Gastrocnemius medialis (tissue), 4 donors: ENCODE measurements at regions of chr10 and their contacts with region 1.

Region 1: DNA sequence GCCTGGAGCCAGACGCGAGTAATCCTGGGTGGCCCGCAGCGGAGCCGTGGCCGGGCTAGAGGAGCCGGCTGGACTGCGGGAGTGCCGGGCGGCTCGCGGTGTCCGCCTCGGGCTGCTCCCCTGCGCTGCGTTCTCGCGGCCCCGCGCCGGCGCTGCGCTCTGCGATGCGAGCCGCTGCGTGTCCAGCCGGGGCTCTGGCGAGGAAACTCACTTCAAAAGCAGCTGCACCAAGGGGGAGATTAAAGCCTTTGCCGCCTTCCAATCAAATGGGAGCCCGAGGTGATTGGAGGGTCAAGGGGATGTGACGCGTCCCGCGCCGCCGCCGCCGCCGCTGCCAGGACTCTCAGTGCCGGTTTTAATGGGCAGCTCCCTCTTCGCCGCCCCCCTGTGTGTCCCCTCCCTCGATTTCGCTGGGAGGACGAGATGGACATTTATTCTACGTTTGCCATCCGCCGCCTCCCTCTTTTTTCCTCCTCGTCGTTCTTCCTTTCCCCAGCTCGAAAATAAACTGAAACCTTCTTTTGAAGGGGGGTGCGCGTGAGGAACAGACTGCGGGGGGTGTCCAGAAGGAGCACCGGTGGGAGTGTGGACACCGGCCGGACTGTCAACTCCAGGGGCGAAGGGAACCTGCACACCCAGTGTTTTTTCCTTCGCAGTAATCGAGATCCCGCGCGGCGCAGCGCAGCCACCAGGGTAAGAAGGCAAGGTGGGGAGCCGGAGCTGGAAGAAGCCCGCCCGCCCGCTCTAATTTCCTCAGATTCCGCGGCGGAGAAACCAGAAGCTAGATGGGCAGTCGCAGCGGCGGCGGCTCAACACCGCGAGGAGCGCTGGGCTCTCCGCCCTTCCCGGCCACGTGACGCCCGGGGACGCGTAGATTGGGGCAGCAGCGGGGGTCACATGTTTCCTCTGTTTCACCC is at the start of gene ZNF503:
- DNase-seq: peak; percentile 93 to 97
- ATAC-seq: peak; percentile 75 to 83
- H3K4me3 ChIP-seq: peak within 1 kb of the TSS; percentile 57 to 82 (median 72)
- H3K27ac ChIP-seq: peak within 1 kb of the TSS; percentile 85 to 98 (median 98)
- H3K4me1 ChIP-seq: peaks cover 0 to 30% of the 10 kb centered on the region in 2 donors
- H3K27me3 ChIP-seq: peaks cover 0 to 37% (median 29%) of the 10 kb centered on the region in 3 donors
- CTCF ChIP-seq: peak in 4 of 5 experiments; percentile 15 to 39 (median 34)
- POLR2A ChIP-seq: peak; percentile 86 to 91
- total RNA-seq, gene ZNF503: 1.7 to 2.0 (median 1.8) TPM

Region 2: DNA sequence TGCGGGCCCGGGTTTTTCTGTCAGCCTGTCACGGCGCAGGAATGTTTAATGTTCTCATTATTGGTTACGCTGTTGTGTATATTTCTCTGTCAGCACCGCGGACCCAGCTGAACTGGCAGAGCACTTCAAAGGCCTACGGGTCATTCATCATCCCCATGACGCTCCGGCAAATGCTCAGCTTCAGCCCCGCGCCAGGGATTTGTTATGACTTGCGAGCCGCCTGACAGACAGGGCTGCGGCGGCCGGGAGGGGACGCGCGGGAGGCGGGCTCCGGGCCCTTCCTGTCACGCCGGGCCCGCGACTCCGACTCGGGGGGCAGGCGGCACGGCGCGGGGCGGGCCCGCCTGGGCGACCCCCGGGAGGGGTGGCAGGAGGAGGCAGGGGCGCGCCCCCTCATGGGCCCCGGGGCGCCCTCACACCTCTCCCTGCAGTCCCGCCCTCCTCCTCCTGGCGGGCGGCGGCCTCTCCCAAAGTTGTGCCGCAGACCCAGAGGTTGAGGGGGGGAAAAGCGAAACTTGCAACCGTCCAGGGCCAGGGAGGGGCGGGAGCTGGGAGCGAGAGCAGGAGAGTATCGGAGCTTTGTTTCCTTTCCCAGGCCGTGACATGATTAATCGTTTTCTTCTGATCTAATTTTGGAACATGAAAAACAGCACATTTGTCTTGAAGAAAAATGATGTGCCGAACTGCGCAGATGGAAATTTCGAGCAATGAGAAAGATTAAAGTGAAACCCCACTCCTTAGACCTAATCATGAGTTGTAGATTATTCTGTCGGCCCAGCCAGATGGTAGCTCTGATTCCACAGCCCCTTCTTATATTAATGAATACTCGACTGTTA is 106.7 kb before region 1 on chr10:
- in situ Hi-C with region 1: no loop called
- intact Hi-C with region 1: loop called (anchors 2 kb)
- DNase-seq: peak; percentile 69 to 80
- ATAC-seq: peak; percentile 76 to 77
- H3K4me3 ChIP-seq: peak overlapping the region; percentile 58 to 76 (median 64)
- H3K27ac ChIP-seq: peak overlapping the region; percentile 87 to 92 (median 90)
- H3K4me1 ChIP-seq: peaks cover 21 to 22% of the 10 kb centered on the region in 2 donors
- H3K27me3 ChIP-seq: no peaks in the 10 kb centered on the region
- CTCF ChIP-seq: peak; percentile 29 to 60 (median 40)
- POLR2A ChIP-seq: peak; percentile 77 to 85

Region 3: DNA sequence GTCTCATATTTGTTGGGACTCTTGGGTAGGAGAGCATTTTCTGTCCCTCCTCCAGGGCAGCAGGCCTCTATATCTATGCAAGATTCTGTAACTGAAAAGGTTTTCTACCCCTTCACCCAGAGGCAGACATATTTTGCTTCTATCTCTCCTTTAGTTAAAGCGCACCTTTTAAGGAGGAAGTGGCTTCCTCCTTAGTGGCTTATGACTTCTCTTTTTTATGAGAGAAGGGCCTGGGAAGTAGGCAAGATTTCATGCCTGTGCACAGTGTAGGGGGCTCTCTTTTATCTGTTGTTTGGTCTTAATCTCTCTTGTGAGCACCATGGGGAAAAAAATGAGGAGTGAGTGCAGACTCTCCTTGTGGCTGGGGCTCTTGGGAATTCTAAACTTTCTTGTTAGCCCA is 151.7 kb after region 1 on chr10:
- in situ Hi-C with region 1: no loop called
- intact Hi-C with region 1: no loop called
- DNase-seq: no peak
- ATAC-seq: no peak
- H3K4me3 ChIP-seq: no peak overlapping the region
- H3K27ac ChIP-seq: no peak overlapping the region
- H3K4me1 ChIP-seq: no peaks in the 10 kb centered on the region
- H3K27me3 ChIP-seq: no peaks in the 10 kb centered on the region
- CTCF ChIP-seq: no peak
- POLR2A ChIP-seq: no peak

Region 4: DNA sequence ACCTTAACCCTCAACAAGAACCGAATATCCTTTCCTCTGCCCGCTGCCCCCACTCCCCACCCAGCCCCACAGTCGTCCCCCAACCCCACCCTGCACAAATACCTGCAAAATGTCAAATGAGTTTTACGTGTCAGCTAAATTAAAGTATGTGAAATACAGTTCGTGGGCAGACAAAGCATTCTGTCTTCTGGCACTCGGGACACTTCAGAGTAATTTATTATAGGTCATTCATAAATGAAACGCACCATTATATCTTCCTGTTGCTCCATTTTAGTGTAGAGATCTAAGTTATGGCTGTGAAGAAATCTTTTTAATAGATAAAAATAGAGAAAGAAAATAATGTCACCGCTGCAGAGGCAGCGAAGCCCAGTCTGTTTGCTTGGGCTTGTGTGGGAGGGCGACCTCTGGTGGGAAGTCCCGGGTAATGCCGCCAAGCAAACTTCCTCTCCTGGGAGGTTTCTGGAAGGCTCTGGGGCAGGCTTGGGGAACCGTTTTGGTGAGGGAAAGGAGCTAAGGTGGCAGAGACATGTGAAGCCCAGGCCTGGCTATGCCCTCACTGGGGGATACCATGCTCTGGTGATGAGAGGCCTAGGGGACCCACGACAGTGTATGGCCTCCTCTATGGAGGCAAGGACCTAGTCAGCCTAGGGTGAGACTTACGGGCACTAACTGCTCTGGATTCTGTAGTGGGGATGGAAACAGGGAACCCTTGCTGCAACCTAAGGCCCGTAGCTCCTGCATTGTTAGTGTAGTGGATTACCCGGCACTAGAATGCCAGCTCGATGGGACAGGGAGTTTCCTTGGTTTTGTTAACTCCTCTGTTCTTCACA is 634.5 kb after region 1 on chr10:
- in situ Hi-C with region 1: loop called (anchors 10 to 25 kb)
- intact Hi-C with region 1: loop called (anchors 1 kb)
- DNase-seq: peak; percentile 53 to 65
- ATAC-seq: peak; percentile 81 to 89
- H3K4me3 ChIP-seq: peak overlapping the region; percentile 29 to 55 (median 38)
- H3K27ac ChIP-seq: peak overlapping the region in 3 of 4 donors; percentile 2 to 50 (median 42)
- H3K4me1 ChIP-seq: peaks cover 6 to 15% of the 10 kb centered on the region in 2 donors
- H3K27me3 ChIP-seq: no peaks in the 10 kb centered on the region
- CTCF ChIP-seq: peak; percentile 73 to 96 (median 77)
- POLR2A ChIP-seq: no peak

Region 5: GRCh38 chr10:76303682-76304316 is 902.0 kb after region 1 on chr10:
- in situ Hi-C with region 1: loop called in 1 of 4 experiments (anchors 25 kb)
- intact Hi-C with region 1: loop called (anchors 5 kb)
- DNase-seq: peak; percentile 21 to 52
- ATAC-seq: peak; percentile 62 to 75
- H3K4me3 ChIP-seq: no peak overlapping the region
- H3K27ac ChIP-seq: no peak overlapping the region
- H3K4me1 ChIP-seq: peaks cover 0 to 4% of the 10 kb centered on the region in 2 donors
- H3K27me3 ChIP-seq: no peaks in the 10 kb centered on the region
- CTCF ChIP-seq: peak in 2 of 5 experiments; percentile 12 to 45
- POLR2A ChIP-seq: no peak

Region 6: GRCh38 chr10:76558586-76558985 is 1156.8 kb after region 1 on chr10:
- in situ Hi-C with region 1: loop called in 1 of 4 experiments (anchors 25 kb)
- intact Hi-C with region 1: loop called (anchors 10 kb)
- DNase-seq: peak in 1 of 2 donors; percentile 19
- ATAC-seq: no peak
- H3K4me3 ChIP-seq: no peak overlapping the region
- H3K27ac ChIP-seq: no peak overlapping the region
- H3K4me1 ChIP-seq: peaks cover 0 to 4% of the 10 kb centered on the region in 2 donors
- H3K27me3 ChIP-seq: no peaks in the 10 kb centered on the region
- CTCF ChIP-seq: no peak
- POLR2A ChIP-seq: no peak